Activated CD4-positive, alpha-beta T cell treated with anti-CD3 and anti-CD28 coated beads, Interleukin-2, amount 10 ng/mL, durations not matched to agents 24 days and 14 days (primary cell): ENCODE measurements at regions of chr3 and their contacts with region 1.

Region 1: DNA sequence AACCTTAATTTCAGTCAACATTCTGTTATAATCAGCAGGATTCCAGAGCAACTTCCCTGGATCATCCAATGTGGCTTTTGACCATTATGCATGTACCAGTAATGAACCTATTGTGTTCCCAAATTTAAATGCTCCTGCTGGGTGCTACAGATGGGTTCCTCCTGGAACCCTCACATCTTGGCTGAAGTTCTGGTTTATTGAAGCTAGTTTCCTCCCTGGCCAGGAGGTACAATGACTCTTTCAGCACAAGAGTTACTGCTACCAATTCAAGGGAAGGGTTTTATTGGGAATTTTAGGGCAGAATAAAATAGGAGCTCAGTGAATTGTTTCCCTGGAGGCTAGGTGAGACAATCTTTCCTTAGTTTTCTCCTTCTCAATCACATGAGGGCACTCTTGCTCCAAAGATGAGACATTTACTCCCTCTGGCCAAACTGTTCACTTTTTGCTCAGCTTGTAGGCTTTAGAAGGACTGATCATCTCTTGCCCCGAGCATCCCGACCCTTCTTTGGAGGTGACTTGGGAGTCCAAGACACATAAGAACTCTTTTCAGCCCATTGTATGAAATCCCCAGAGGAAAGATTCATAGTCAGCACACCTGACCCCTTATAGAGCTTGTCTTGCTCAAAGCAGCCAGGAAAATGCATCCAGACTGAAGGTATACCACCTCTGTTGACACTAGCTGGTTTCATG is 8.8 kb upstream of the NPHP3 start:
- DNase-seq: peak; percentile 63
- H3K4me3 Mint-ChIP-seq: no peak overlapping the region
- H3K27ac Mint-ChIP-seq: no peak overlapping the region
- H3K4me1 Mint-ChIP-seq: no peaks in the 10 kb centered on the region
- H3K27me3 Mint-ChIP-seq: peaks cover 50% of the 10 kb centered on the region

Region 2: DNA sequence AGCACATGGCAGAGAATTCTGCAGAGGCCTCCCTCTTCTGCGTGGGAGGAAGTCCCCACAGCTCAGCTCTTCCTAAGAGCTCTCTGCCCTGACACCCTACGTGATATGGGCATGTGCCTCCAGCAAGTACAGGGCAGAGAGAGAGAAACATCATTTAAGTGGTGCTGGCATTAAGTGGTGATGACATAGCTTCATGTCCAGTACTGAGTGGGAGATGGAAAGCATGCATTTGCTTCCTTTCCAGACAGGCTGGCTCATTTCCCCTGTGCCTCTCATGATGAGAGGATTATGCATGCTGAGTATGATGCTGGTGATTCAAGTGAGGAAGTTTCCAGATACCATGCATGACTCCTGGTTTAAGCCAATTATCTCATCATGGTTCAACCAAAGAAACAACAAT is 695.7 kb after region 1 on chr3:
- intact Hi-C with region 1: loop called (anchors 1 kb)
- DNase-seq: no peak
- H3K4me3 Mint-ChIP-seq: no peak overlapping the region
- H3K27ac Mint-ChIP-seq: no peak overlapping the region
- H3K4me1 Mint-ChIP-seq: peaks cover 5% of the 10 kb centered on the region
- H3K27me3 Mint-ChIP-seq: no peaks in the 10 kb centered on the region